CD4-positive, alpha-beta T cell (primary cell): ENCODE measurements at regions of chr6 and their contacts with region 1.

Region 1: DNA sequence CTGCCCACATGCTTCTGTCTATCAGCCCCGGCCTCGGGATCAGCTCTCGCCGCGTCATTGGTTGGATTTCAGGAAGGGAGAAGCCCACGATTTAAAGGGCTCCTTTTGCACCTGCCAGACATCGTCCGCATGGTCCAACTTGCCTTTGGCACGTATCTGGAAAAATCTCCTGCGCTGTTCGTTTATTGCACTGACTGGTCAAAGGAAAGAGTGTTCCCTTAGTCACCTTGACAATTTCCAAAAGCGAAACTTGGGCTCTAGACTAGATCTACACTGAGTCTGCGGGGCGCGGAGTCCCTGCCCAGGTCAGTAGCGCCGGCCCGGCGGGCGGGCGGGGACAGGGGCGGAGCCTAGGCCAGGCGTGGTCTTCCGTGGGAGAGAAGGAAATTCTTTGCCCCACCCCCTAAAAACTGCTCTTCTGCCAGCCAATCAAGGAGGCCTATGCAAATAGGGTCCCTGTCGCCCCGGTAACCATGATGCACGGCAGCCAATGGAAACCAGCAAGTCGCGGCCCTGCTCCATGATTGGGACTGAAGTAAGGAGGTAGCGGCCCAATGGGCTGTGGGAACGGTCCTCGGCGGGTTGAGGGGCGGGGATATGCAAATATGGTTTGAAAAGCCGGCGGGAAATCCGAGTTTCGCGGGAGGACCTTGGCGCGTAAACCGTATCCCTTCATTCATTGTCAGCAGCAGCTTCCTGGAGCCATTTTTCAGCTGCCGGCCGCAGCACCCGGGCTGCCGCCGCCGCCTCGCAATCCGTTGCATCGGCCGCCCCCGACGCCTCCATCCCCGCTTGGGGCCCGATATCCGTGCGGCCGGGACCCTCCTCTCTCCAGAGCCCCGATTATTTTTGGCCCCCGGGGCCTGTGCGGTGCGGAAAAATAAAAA is at the start of gene E2F3:
- DNase-seq: peak; percentile 97 to 100 (median 98)
- ATAC-seq: peak; percentile 87
- H3K4me3 ChIP-seq: peak within 1 kb of the TSS; percentile 74
- H3K4me3 Mint-ChIP-seq: peak within 1 kb of the TSS; percentile 92
- H3K27ac ChIP-seq: peak within 1 kb of the TSS; percentile 35 to 85
- H3K27ac Mint-ChIP-seq: peak within 1 kb of the TSS; percentile 80
- H3K4me1 ChIP-seq: peaks cover 23% of the 10 kb centered on the region
- H3K4me1 Mint-ChIP-seq: peaks cover 44% of the 10 kb centered on the region
- H3K27me3 ChIP-seq: no peaks in the 10 kb centered on the region
- H3K27me3 Mint-ChIP-seq: no peaks in the 10 kb centered on the region
- CTCF ChIP-seq: no peak
- total RNA-seq, gene E2F3: 2.7 to 2.9 TPM

Region 2: GRCh38 chr6:20212392-20213217 is 188.8 kb before region 1 on chr6 and contains the start of gene MBOAT1:
- CTCF ChIA-PET with region 1: no interaction called
- POLR2A ChIA-PET with region 1: interaction called, 9 read pairs
- intact Hi-C with region 1: loop called (anchors 5 kb)
- DNase-seq: peak; percentile 27 to 86 (median 56)
- ATAC-seq: peak; percentile 78
- H3K4me3 ChIP-seq: peak within 1 kb of the TSS; percentile 83
- H3K4me3 Mint-ChIP-seq: peak within 1 kb of the TSS; percentile 99
- H3K27ac ChIP-seq: peak within 1 kb of the TSS; percentile 61 to 78
- H3K27ac Mint-ChIP-seq: peak within 1 kb of the TSS; percentile 97
- H3K4me1 ChIP-seq: peaks cover 28% of the 10 kb centered on the region
- H3K4me1 Mint-ChIP-seq: peaks cover 48% of the 10 kb centered on the region
- H3K27me3 ChIP-seq: no peaks in the 10 kb centered on the region
- H3K27me3 Mint-ChIP-seq: no peaks in the 10 kb centered on the region
- CTCF ChIP-seq: no peak
- total RNA-seq, gene MBOAT1: 17.2 to 18.5 TPM

Region 3: DNA sequence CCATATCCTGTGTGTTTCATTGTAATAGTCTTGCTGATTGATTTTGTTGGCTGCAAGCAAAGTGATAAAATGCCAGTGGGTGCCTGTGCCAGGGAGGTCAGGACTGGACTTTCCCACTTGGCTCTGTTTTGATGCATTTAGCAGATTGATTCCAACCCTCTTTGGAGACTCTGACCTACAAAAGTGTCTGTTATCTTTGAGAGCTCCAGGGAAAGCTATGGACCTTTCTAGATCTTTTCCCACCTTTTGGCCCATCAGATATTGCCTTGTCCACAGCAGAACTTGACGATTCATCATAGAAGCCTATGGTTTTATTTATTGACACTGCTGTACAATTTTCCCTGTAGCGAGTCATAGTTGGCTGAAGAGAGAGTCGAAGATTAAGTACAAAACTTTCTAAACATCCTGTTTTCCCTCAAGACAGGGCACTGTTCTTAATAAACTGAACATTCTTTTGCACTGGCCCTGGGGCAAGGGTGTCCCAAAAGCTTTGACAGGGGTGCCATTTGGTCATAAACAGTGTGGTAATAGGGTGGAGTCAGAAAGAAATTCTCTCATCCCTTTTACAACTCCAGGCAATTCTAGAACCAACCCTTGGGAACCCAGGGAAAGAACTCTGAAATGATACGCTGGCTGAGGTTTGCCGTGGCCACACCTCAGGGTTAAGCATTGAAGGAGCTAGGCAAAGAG is 53.9 kb after region 1 on chr6:
- CTCF ChIA-PET with region 1: interaction called, 3 read pairs
- POLR2A ChIA-PET with region 1: no interaction called
- intact Hi-C with region 1: loop called in 1 of 2 experiments (anchors 2 kb)
- DNase-seq: no peak
- ATAC-seq: no peak
- H3K4me3 ChIP-seq: no peak overlapping the region
- H3K4me3 Mint-ChIP-seq: no peak overlapping the region
- H3K27ac ChIP-seq: no peak overlapping the region
- H3K27ac Mint-ChIP-seq: no peak overlapping the region
- H3K4me1 ChIP-seq: no peaks in the 10 kb centered on the region
- H3K4me1 Mint-ChIP-seq: peaks cover 25% of the 10 kb centered on the region
- H3K27me3 ChIP-seq: no peaks in the 10 kb centered on the region
- H3K27me3 Mint-ChIP-seq: no peaks in the 10 kb centered on the region
- CTCF ChIP-seq: no peak

Region 4: GRCh38 chr6:20467437-20467836 is 66.0 kb after region 1 on chr6:
- CTCF ChIA-PET with region 1: no interaction called
- POLR2A ChIA-PET with region 1: no interaction called
- intact Hi-C with region 1: no loop called
- DNase-seq: no peak
- ATAC-seq: no peak
- H3K4me3 ChIP-seq: no peak overlapping the region
- H3K4me3 Mint-ChIP-seq: no peak overlapping the region
- H3K27ac ChIP-seq: no peak overlapping the region
- H3K27ac Mint-ChIP-seq: no peak overlapping the region
- H3K4me1 ChIP-seq: no peaks in the 10 kb centered on the region
- H3K4me1 Mint-ChIP-seq: peaks cover 6% of the 10 kb centered on the region
- H3K27me3 ChIP-seq: no peaks in the 10 kb centered on the region
- H3K27me3 Mint-ChIP-seq: no peaks in the 10 kb centered on the region
- CTCF ChIP-seq: no peak

Region 5: GRCh38 chr6:20534295-20535262 is 133.1 kb after region 1 on chr6 and contains the start of gene CDKAL1:
- CTCF ChIA-PET with region 1: interaction called, 9 read pairs
- POLR2A ChIA-PET with region 1: interaction called, 14 read pairs
- intact Hi-C with region 1: loop called in 1 of 2 experiments (anchors 1 kb)
- DNase-seq: peak; percentile 81 to 94 (median 86)
- ATAC-seq: peak; percentile 87
- H3K4me3 ChIP-seq: peak within 1 kb of the TSS; percentile 86
- H3K4me3 Mint-ChIP-seq: peak within 1 kb of the TSS; percentile 99
- H3K27ac ChIP-seq: peak within 1 kb of the TSS; percentile 74 to 86
- H3K27ac Mint-ChIP-seq: peak within 1 kb of the TSS; percentile 98
- H3K4me1 ChIP-seq: peaks cover 3% of the 10 kb centered on the region
- H3K4me1 Mint-ChIP-seq: peaks cover 43% of the 10 kb centered on the region
- H3K27me3 ChIP-seq: no peaks in the 10 kb centered on the region
- H3K27me3 Mint-ChIP-seq: peaks cover 6% of the 10 kb centered on the region
- CTCF ChIP-seq: no peak
- total RNA-seq, gene CDKAL1: 21.3 to 23.9 TPM

Region 6: DNA sequence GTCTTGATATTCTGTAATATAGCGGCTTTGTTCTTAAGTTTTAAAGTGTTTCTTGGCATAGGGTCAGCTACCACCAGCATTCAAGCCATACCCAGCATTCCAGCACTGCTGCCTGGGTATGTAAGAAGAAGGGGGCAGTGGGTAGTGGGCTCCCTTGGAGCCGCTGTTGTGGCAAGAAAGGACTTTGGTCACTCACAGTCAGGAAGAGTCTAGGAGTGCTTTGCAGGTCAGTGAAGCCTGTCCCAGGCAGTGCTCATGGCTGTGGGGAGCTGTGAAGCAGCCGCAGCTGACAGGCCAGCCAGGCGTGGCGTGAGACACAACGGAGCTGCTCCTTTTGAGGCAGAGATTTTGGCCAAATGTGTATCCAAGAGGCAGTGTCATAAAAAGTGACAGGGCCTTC is 644.8 kb after region 1 on chr6:
- CTCF ChIA-PET with region 1: no interaction called
- POLR2A ChIA-PET with region 1: no interaction called
- intact Hi-C with region 1: no loop called
- DNase-seq: no peak
- ATAC-seq: no peak
- H3K4me3 ChIP-seq: no peak overlapping the region
- H3K4me3 Mint-ChIP-seq: no peak overlapping the region
- H3K27ac ChIP-seq: no peak overlapping the region
- H3K27ac Mint-ChIP-seq: no peak overlapping the region
- H3K4me1 ChIP-seq: no peaks in the 10 kb centered on the region
- H3K4me1 Mint-ChIP-seq: no peaks in the 10 kb centered on the region
- H3K27me3 ChIP-seq: no peaks in the 10 kb centered on the region
- H3K27me3 Mint-ChIP-seq: no peaks in the 10 kb centered on the region
- CTCF ChIP-seq: no peak